ENCODE measurements at regions of chr14 and their contacts with region 1.

Region 1: GRCh38 chr14:92121670-92122350 is at the starts of genes CPSF2 and NDUFB1:
- DNase-seq: peak; percentile 78 to 88
- H3K4me3 ChIP-seq: peak within 1 kb of the TSS; percentile 84 to 99
- H3K27ac ChIP-seq: peak within 1 kb of the TSS; percentile 91 to 92
- H3K4me1 ChIP-seq: peaks cover 3 to 47% (median 30%) of the 10 kb centered on the region in 4 donors
- H3K27me3 ChIP-seq: no peaks in the 10 kb centered on the region
- CTCF ChIP-seq: peak in 1 of 2 experiments; percentile 41

Region 2: DNA sequence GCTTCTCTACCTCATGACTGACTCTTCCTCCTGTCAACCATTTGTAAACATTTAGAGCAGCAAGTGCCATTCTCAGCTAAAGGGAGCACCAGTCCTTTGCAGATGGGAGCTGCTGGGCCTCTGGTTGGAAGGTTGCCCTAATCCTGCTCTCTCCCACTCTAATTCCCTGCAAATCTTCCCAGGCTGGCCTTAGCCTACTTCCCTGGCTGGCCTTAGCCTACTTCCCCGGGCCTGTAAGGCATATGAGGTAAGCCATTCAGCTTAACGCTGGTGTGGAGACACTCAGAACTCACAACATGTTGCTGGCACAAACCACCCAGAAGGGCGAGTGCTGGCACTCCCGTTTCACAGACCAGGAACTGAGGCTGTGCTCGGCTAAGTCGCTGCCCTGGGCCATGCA is 69.0 kb after region 1 on chr14:
- intact Hi-C with region 1: no loop called
- DNase-seq: no peak
- H3K4me3 ChIP-seq: no peak overlapping the region
- H3K27ac ChIP-seq: no peak overlapping the region
- H3K4me1 ChIP-seq: no peaks in the 10 kb centered on the region
- H3K27me3 ChIP-seq: no peaks in the 10 kb centered on the region
- CTCF ChIP-seq: no peak

Region 3: DNA sequence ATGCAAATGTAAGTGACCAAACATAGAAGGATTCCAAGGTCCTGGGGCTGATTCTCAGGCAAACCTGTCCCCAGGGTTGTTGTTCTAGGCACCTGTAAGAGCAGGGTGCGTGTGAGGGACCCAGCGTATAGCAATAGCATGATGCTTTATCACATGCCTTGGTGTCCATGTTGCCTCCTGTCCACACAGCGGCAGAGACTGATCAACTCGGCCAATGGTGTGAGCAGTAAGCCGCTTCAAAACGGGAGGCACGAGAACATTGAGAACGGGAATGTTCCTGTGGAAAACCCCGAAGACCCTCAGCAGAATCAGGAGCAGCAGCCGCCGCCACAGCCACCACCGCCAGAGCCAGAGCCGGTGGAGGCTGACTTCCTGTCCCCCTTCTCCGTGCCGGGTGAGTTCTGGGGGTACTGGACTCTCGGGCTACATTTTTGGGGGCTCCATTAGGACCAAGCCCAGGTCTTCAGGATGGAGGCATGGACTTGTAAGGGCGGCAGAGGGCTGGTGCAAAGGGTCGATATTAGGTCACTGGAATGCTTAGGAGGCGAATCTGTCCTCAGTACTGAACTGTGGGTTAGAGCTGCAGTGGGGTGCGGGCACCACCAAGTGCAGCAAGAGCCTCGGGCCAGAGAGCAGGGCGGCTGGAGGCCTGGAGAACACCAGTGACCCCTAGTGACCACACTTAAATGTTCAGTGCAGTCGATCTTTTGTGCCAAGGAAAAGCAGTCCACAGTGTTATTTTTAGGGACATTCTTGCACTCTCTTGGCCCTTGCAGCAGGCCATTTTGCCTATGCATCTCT is 334.6 kb after region 1 on chr14:
- intact Hi-C with region 1: loop called (anchors 10 kb)
- DNase-seq: peak in 1 of 2 donors; percentile 38
- H3K4me3 ChIP-seq: no peak overlapping the region
- H3K27ac ChIP-seq: no peak overlapping the region
- H3K4me1 ChIP-seq: peaks cover 0 to 15% (median 3%) of the 10 kb centered on the region in 4 donors
- H3K27me3 ChIP-seq: no peaks in the 10 kb centered on the region
- CTCF ChIP-seq: peak; percentile 68 to 74